Activated B cell treated with CpG ODN at 0.5 μM for 24 hours (primary cell): ENCODE measurements at regions of chr2 and their contacts with region 1.

Region 1: GRCh38 chr2:61529944-61530735 is 8.0 kb downstream of the XPO1 start:
- DNase-seq: no peak
- ATAC-seq: no peak
- H3K4me3 Mint-ChIP-seq: no peak overlapping the region
- H3K27ac Mint-ChIP-seq: no peak overlapping the region
- H3K4me1 Mint-ChIP-seq: peaks cover 44% of the 10 kb centered on the region
- H3K27me3 Mint-ChIP-seq: no peaks in the 10 kb centered on the region
- CTCF ChIP-seq: no peak

Region 2: DNA sequence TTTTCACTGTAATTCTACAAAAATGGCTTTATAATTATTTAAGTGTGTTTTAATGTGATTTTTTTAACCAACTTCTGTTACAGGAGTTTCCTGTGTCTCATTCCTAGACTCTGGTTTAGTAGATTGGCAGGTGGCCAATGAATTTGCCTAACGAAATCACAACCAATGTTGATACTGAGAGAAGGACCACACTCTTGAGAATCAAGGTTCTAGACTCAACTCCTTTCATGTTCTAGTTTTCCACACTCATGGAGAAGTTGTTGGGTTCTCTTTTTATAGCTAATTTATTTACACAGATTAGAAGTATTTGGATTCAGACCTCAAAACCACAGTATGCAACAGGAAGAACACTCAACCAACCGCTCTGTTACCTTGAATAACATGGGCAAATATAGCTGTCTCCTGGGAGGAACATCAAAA is 36.6 kb before region 1 on chr2:
- CTCF ChIA-PET with region 1: no interaction called
- POLR2A ChIA-PET with region 1: interaction called, 4 read pairs
- intact Hi-C with region 1: loop called (anchors 5 kb)
- DNase-seq: no peak
- ATAC-seq: no peak
- H3K4me3 Mint-ChIP-seq: no peak overlapping the region
- H3K27ac Mint-ChIP-seq: peak overlapping the region; percentile 73
- H3K4me1 Mint-ChIP-seq: peaks cover 17% of the 10 kb centered on the region
- H3K27me3 Mint-ChIP-seq: no peaks in the 10 kb centered on the region
- CTCF ChIP-seq: no peak

Region 3: GRCh38 chr2:61510669-61511353 is 19.3 kb before region 1 on chr2:
- CTCF ChIA-PET with region 1: no interaction called
- POLR2A ChIA-PET with region 1: interaction called, 4 read pairs
- intact Hi-C with region 1: loop called (anchors 2 kb)
- DNase-seq: no peak
- ATAC-seq: no peak
- H3K4me3 Mint-ChIP-seq: no peak overlapping the region
- H3K27ac Mint-ChIP-seq: no peak overlapping the region
- H3K4me1 Mint-ChIP-seq: no peaks in the 10 kb centered on the region
- H3K27me3 Mint-ChIP-seq: no peaks in the 10 kb centered on the region
- CTCF ChIP-seq: no peak